Right cardiac atrium (tissue), 5 donors: ENCODE measurements at regions of chr2 and their contacts with region 1.

Region 1: GRCh38 chr2:105789745-105790460 is 45.2 kb downstream of the NCK2 start:
- DNase-seq: no peak
- ATAC-seq: peak; percentile 79 to 83
- H3K4me3 ChIP-seq: no peak overlapping the region
- H3K27ac ChIP-seq: peak overlapping the region; percentile 8
- H3K4me1 ChIP-seq: peaks cover 24% of the 10 kb centered on the region
- H3K27me3 ChIP-seq: no peaks in the 10 kb centered on the region

Region 2: GRCh38 chr2:105744091-105744908 is 45.6 kb before region 1 on chr2:
- intact Hi-C with region 1: loop called in 1 of 4 experiments (anchors 10 kb)
- DNase-seq: peak; percentile 72 to 88 (median 88)
- ATAC-seq: peak; percentile 93
- H3K4me3 ChIP-seq: peak overlapping the region; percentile 85
- H3K27ac ChIP-seq: peak overlapping the region; percentile 86
- H3K4me1 ChIP-seq: peaks cover 15% of the 10 kb centered on the region
- H3K27me3 ChIP-seq: no peaks in the 10 kb centered on the region

Region 3: DNA sequence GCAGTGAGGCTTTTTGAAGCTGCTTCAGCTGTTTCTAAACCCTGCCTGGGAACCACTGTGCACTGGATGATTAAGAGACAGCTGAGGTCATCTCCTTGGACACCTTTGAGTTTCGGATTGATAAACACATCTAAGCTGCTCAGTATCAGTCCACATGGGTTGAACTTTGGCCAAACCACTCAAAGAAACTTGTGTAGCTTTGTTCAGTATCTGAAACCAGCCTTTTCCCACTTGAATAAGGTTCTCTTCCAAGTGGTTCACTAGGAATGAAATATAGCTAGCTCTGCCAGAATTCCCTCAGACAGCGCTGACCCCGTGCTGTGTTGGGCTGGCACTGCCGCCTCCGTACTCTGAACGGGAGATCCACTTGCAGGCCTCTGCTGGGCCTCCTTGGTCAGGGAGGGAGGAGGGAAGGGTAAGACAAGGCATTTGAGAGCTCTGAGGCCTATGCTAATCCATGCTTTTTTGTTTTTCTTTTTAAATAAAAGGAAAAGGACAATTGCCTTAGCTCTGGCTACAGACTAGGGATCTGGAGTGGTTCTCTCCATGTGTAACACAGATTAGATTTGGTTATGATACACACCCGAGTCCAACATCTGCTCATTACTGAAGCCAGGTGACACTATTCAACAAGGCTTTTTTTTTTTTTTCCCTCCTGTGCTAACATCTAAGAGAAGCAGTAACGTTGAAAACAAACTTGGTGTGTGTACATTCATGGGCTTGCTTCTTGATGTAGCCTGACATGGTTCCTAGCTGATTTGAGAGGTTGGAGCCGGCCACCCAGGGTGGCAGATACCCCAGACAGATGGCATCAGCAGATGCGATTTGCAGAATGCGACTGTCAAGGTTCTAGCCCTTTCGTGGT is 22.5 kb after region 1 on chr2:
- intact Hi-C with region 1: no loop called
- DNase-seq: peak; percentile 47 to 81 (median 73)
- ATAC-seq: peak; percentile 91 to 93
- H3K4me3 ChIP-seq: no peak overlapping the region
- H3K27ac ChIP-seq: no peak overlapping the region
- H3K4me1 ChIP-seq: peaks cover 17% of the 10 kb centered on the region
- H3K27me3 ChIP-seq: no peaks in the 10 kb centered on the region